Heart right ventricle (tissue), 16 donors: ENCODE measurements at regions of chr22 and their contacts with region 1.

Region 1: GRCh38 chr22:32926600-32926999 is 125.1 kb downstream of the TIMP3 start:
- DNase-seq: no peak
- ATAC-seq: peak in 1 of 8 donors; percentile 52
- H3K4me3 ChIP-seq: no peak overlapping the region
- H3K27ac ChIP-seq: no peak overlapping the region
- H3K4me1 ChIP-seq: no peaks in the 10 kb centered on the region
- H3K27me3 ChIP-seq: no peaks in the 10 kb centered on the region
- CTCF ChIP-seq: peak; percentile 35 to 80 (median 69)

Region 2: DNA sequence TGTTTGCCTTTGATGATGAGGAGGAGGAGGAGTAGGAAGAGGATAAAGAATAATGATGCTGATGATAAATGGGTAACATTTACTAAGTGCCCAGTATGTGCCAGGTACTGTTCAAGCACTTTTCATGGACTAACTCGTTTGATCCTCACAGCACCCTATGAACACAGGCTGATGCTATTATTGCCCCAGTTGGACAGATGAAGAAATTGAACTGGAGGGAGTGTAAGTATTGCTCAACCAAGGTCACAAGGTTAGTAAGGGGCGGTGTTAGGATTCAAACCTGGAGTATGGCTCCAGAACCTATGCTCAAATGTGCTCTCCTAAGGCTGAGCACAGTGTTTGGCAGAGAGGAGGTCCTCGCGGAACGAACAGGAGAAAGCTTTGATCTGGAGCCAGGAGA is 53.0 kb after region 1 on chr22:
- intact Hi-C with region 1: loop called in 3 of 10 experiments (anchors 2 to 10 kb)
- DNase-seq: no peak
- ATAC-seq: peak in 1 of 8 donors; percentile 51
- H3K4me3 ChIP-seq: no peak overlapping the region
- H3K27ac ChIP-seq: no peak overlapping the region
- H3K4me1 ChIP-seq: no peaks in the 10 kb centered on the region
- H3K27me3 ChIP-seq: no peaks in the 10 kb centered on the region
- CTCF ChIP-seq: no peak

Region 3: DNA sequence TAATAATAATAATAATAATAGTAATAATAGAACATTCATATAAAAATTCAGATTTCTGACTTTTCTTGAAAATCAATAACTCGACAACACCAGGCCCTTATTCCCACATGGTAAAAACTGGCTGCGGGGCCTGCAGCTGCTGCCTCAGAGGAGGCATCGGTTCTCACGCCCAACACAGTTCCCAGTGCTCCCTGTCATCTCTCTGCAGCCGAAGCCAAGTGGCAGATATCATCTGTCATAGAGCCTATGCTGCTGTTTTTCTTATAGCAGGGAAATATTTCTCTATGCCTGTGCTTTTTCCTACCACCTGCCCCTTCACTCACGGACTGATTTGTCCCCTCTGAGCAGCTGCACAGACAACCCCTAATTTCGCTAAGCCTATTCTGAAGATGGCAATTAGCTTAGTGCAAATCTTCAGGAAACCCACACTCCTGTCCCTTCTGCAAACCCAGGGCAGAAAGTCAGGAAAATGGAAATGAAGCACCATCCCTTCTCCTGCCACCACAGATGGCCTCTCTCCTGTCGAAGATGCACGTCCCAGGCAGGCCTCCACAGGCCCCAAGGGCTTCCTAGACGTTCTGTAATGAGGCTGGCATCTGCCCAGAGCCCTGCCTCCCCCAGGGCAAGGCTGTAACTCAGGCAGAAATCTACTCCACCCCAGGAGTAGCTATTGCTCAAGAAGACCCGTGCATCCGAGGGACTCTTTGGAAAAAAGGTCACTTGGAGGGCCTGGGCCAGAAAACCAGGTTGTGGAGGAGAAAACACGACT is 64.9 kb after region 1 on chr22:
- intact Hi-C with region 1: loop called in 7 of 10 experiments (anchors 1 to 10 kb)
- DNase-seq: peak in 1 of 2 donors; percentile 52
- ATAC-seq: peak in 2 of 8 donors; percentile 48 to 63
- H3K4me3 ChIP-seq: no peak overlapping the region
- H3K27ac ChIP-seq: no peak overlapping the region
- H3K4me1 ChIP-seq: peaks cover 0 to 17% (median 7%) of the 10 kb centered on the region in 9 donors
- H3K27me3 ChIP-seq: no peaks in the 10 kb centered on the region
- CTCF ChIP-seq: no peak